Right lobe of liver (tissue), 6 donors: ENCODE measurements at regions of chr20 and their contacts with region 1.

Region 1: GRCh38 chr20:31851240-31851955 is 6.0 kb upstream of the FOXS1 start:
- DNase-seq: no peak
- ATAC-seq: no peak
- H3K4me3 ChIP-seq: no peak overlapping the region
- H3K27ac ChIP-seq: no peak overlapping the region
- H3K4me1 ChIP-seq: no peaks in the 10 kb centered on the region
- H3K27me3 ChIP-seq: no peaks in the 10 kb centered on the region
- CTCF ChIP-seq: no peak
- POLR2A ChIP-seq: no peak

Region 2: GRCh38 chr20:31951530-31952453 is 100.4 kb after region 1 on chr20 and contains the start of gene PDRG1:
- intact Hi-C with region 1: loop called (anchors 5 kb)
- DNase-seq: peak; percentile 95 to 96 (median 95)
- ATAC-seq: peak; percentile 99 to 100 (median 99)
- H3K4me3 ChIP-seq: peak within 1 kb of the TSS; percentile 97 to 99 (median 99)
- H3K27ac ChIP-seq: peak within 1 kb of the TSS; percentile 64 to 75 (median 69)
- H3K4me1 ChIP-seq: peaks cover 0 to 11% (median 3%) of the 10 kb centered on the region in 4 donors
- H3K27me3 ChIP-seq: no peaks in the 10 kb centered on the region
- CTCF ChIP-seq: peak; percentile 89 to 99 (median 98)
- POLR2A ChIP-seq: peak; percentile 62
- total RNA-seq, gene PDRG1: 4.5 to 6.6 (median 4.9) TPM

Region 3: GRCh38 chr20:31962761-31963160 is 111.4 kb after region 1 on chr20:
- intact Hi-C with region 1: no loop called
- DNase-seq: no peak
- ATAC-seq: no peak
- H3K4me3 ChIP-seq: no peak overlapping the region
- H3K27ac ChIP-seq: no peak overlapping the region
- H3K4me1 ChIP-seq: no peaks in the 10 kb centered on the region
- H3K27me3 ChIP-seq: no peaks in the 10 kb centered on the region
- CTCF ChIP-seq: no peak
- POLR2A ChIP-seq: no peak